Activated CD4-positive, alpha-beta memory T cell treated with anti-CD3 and anti-CD28 coated beads, Interleukin-2, amount 10 ng/mL, durations not matched to agents 7 days and 5 days (primary cell): ENCODE measurements at regions of chr7 and their contacts with region 1.

Region 1: GRCh38 chr7:24979863-24980533 is at the start of gene OSBPL3:
- DNase-seq: peak; percentile 96
- H3K4me3 Mint-ChIP-seq: peak within 1 kb of the TSS; percentile 90
- H3K27ac Mint-ChIP-seq: peak within 1 kb of the TSS; percentile 88
- H3K4me1 Mint-ChIP-seq: peaks cover 59% of the 10 kb centered on the region
- H3K27me3 Mint-ChIP-seq: no peaks in the 10 kb centered on the region
- total RNA-seq, gene OSBPL3: 90.3 to 99.9 TPM

Region 2: GRCh38 chr7:24812310-24812945 is 167.6 kb before region 1 on chr7:
- CTCF ChIA-PET with region 1: interaction called, 55 read pairs
- POLR2A ChIA-PET with region 1: interaction called, 8 read pairs
- DNase-seq: peak; percentile 55
- H3K4me3 Mint-ChIP-seq: no peak overlapping the region
- H3K27ac Mint-ChIP-seq: peak overlapping the region; percentile 44
- H3K4me1 Mint-ChIP-seq: no peaks in the 10 kb centered on the region
- H3K27me3 Mint-ChIP-seq: no peaks in the 10 kb centered on the region

Region 3: GRCh38 chr7:24836084-24836483 is 143.9 kb before region 1 on chr7:
- CTCF ChIA-PET with region 1: interaction called, 14 read pairs
- POLR2A ChIA-PET with region 1: interaction called, 7 read pairs
- DNase-seq: no peak
- H3K4me3 Mint-ChIP-seq: no peak overlapping the region
- H3K27ac Mint-ChIP-seq: peak overlapping the region; percentile 16
- H3K4me1 Mint-ChIP-seq: peaks cover 54% of the 10 kb centered on the region
- H3K27me3 Mint-ChIP-seq: no peaks in the 10 kb centered on the region

Region 4: DNA sequence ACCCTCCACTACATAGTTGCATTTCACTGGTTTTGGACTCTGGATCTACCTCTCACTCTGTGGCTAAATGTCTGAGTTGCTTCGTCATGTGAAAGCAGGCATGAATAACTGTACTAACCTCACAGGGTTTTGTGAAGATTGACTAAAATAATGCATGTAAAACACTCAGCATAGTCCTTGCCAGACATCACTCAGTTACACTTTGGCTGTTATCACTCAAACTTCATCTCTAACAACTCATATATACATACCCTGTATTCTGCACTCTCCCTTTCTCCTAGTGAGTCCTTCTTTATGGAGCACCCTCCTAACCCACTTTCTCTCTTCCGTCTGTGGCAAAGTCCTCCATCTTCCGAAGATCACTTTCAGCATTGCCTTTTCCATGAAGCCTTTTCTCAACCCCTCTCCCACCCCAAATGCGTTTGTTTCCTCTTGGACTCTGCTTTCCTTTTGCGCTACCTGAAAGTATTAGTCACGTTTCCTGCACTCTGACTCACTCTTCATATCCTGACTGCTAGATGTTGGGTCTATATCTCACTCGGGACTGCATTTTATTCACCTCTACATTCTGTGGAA is 72.6 kb before region 1 on chr7:
- CTCF ChIA-PET with region 1: interaction called, 29 read pairs
- POLR2A ChIA-PET with region 1: interaction called, 174 read pairs
- DNase-seq: peak; percentile 52
- H3K4me3 Mint-ChIP-seq: no peak overlapping the region
- H3K27ac Mint-ChIP-seq: no peak overlapping the region
- H3K4me1 Mint-ChIP-seq: peaks cover 28% of the 10 kb centered on the region
- H3K27me3 Mint-ChIP-seq: no peaks in the 10 kb centered on the region

Region 5: GRCh38 chr7:25028370-25029021 is 48.5 kb after region 1 on chr7:
- CTCF ChIA-PET with region 1: interaction called, 7 read pairs
- POLR2A ChIA-PET with region 1: interaction called, 49 read pairs
- DNase-seq: peak; percentile 27
- H3K4me3 Mint-ChIP-seq: peak overlapping the region; percentile 2
- H3K27ac Mint-ChIP-seq: peak overlapping the region; percentile 81
- H3K4me1 Mint-ChIP-seq: peaks cover 49% of the 10 kb centered on the region
- H3K27me3 Mint-ChIP-seq: peaks cover 17% of the 10 kb centered on the region

Region 6: DNA sequence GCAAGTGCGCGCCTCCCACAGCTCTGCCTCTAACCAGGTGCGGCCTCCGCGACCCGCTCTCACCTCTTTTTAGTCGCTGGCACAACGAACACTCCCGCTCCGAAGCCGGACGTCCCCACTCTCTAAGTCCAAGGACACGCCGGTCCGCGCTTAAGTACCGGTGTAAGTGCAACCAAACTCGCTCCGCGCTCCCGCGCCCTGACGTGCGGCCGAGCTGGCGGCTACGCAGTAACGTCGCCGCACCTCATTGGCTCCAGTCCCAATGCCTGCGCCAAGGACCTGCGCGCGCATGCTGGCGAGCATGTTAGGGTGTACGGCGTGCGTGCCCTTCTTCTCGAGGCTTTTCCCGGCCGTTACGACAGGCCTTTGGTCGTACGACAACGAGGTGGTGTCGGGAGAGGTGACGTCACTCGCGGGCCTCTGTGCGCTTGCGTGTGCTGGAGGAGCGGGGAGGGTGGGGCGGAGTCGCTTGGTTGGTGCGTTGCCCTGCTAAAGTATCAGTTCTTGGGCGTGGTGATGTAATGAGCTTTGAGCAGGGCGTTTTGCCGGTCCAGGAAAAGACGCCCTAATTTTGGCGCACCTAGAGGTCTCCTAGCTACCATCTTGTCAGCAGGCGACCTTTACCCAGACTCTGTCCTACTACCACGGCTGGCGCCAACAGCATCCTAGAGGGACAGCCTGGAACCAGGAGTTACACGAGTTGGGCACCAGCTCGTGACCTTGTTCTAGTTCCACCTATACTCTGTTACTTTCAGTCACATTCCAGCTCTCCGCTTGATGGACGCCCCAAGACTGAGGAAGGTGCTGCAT is 145.3 kb after region 1 on chr7 and contains the start of gene CYCS:
- CTCF ChIA-PET with region 1: interaction called, 5 read pairs
- POLR2A ChIA-PET with region 1: interaction called, 25 read pairs
- DNase-seq: peak; percentile 100
- H3K4me3 Mint-ChIP-seq: peak within 1 kb of the TSS; percentile 93
- H3K27ac Mint-ChIP-seq: peak within 1 kb of the TSS; percentile 97
- H3K4me1 Mint-ChIP-seq: peaks cover 33% of the 10 kb centered on the region
- H3K27me3 Mint-ChIP-seq: peaks cover 2% of the 10 kb centered on the region
- total RNA-seq, gene CYCS: 108 to 111 TPM

Region 7: GRCh38 chr7:25187932-25188331 is 207.9 kb after region 1 on chr7:
- CTCF ChIA-PET with region 1: no interaction called
- POLR2A ChIA-PET with region 1: no interaction called
- DNase-seq: no peak
- H3K4me3 Mint-ChIP-seq: no peak overlapping the region
- H3K27ac Mint-ChIP-seq: no peak overlapping the region
- H3K4me1 Mint-ChIP-seq: no peaks in the 10 kb centered on the region
- H3K27me3 Mint-ChIP-seq: peaks cover 13% of the 10 kb centered on the region